Heart left ventricle (tissue), 16 donors: ENCODE measurements at regions of chrX and their contacts with region 1.

Region 1: DNA sequence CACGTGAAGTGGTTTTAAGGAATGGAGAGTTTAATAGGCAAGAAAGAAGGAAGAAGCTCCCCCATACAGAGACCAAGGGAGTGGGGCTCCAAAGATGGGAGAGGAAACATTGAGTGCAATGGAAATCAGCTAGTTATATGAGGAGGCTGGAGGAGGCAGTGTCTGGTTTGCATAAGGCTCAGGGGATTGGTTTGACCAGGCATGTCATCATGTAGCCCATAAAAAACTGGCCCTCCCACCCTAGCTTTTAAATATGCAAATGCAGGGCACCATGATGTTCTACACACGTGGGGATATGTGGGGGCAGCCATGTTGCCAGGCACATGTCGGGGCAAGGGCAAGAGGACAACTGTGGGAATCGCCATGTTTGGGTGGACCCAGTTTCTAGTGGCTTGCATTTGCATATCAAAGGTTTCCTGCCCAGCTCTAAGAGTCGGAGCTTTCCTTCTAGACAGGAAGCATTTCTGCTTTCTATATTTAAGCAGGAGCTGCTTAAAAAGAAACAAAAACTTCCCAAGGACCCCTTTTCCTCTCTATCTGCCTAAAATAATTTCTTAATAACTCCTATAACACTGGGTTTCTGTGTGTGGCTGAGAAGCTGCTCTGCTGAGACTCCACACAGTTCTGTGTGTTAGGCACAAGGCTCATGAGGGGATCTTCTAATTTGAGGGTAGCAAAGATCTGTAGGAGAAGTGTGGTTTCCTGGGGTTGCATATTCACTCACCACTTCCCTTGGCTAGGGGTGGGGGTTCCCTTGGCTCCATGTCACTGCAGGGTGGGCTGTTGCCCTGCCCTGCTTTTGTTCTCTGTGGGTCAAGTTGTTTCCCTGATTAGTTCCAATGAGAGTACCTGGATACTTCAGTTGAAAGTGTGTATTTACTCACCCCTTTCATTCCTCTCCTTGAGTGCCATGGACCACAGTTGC is 113.5 kb downstream of the VSIG4 start:
- DNase-seq: no peak
- ATAC-seq: no peak
- H3K4me3 ChIP-seq: peak overlapping the region in 1 of 12 donors; percentile 10
- H3K27ac ChIP-seq: peak overlapping the region in 1 of 12 donors; percentile 25
- H3K4me1 ChIP-seq: peaks cover 0 to 24% (median 0%) of the 10 kb centered on the region in 12 donors
- H3K27me3 ChIP-seq: peaks cover 0 to 49% (median 0%) of the 10 kb centered on the region in 9 donors
- CTCF ChIP-seq: no peak
- POLR2A ChIP-seq: no peak

Region 2: GRCh38 chrX:65971151-65971550 is 44.8 kb after region 1 on chrX:
- intact Hi-C with region 1: loop called in 1 of 10 experiments (anchors 2 kb)
- DNase-seq: peak in 1 of 5 donors; percentile 4
- ATAC-seq: no peak
- H3K4me3 ChIP-seq: peak overlapping the region in 1 of 12 donors; percentile 30
- H3K27ac ChIP-seq: no peak overlapping the region
- H3K4me1 ChIP-seq: no peaks in the 10 kb centered on the region
- H3K27me3 ChIP-seq: peaks cover 0 to 56% (median 0%) of the 10 kb centered on the region in 9 donors
- CTCF ChIP-seq: no peak
- POLR2A ChIP-seq: no peak